Panc1 (cell line): ENCODE measurements at regions of chr12 and their contacts with region 1.

Region 1: GRCh38 chr12:68435816-68436215 is 103.7 kb upstream of the MDM1 start:
- DNase-seq: no peak
- ATAC-seq: peak; percentile 76
- H3K4me3 ChIP-seq: no peak overlapping the region
- H3K27ac ChIP-seq: peak overlapping the region; percentile 95
- H3K4me1 ChIP-seq: peaks cover 24% of the 10 kb centered on the region
- H3K27me3 ChIP-seq: no peaks in the 10 kb centered on the region
- CTCF ChIP-seq: no peak

Region 2: DNA sequence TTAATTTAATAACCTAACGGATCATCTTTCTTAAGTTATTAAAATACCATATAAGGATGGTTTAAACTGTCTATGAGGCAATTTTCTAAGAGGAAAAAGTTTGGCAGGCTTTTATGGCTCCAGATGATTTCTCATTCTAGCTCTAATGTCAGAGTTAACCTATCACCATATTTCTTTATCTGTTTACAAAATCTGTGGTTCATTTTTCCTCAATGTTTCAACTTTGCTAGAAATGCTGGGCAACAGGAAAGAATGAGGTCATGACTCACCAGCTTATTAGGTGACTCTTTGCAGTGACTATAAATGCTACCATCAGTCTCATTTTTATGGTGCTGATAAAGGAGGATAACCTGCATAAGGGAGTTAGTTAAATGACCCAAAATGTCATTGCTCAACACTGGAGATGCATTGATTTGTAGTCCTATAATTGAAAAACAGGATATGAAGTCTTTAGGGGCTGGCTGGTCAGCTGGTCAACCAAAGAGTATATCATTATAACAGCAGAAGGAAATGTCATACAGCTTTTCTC is 129.6 kb after region 1 on chr12:
- CTCF ChIA-PET with region 1: no interaction called
- POLR2A ChIA-PET with region 1: interaction called, 11 read pairs
- in situ Hi-C with region 1: no loop called
- intact Hi-C with region 1: no loop called
- DNase-seq: peak; percentile 67
- ATAC-seq: peak; percentile 95
- H3K4me3 ChIP-seq: no peak overlapping the region; a peak in 1 of 4 replicates
- H3K27ac ChIP-seq: peak overlapping the region; percentile 95
- H3K4me1 ChIP-seq: peaks cover 50% of the 10 kb centered on the region
- H3K27me3 ChIP-seq: no peaks in the 10 kb centered on the region
- CTCF ChIP-seq: no peak